ENCODE measurements at regions of chrX and their contacts with region 1.

Region 1: DNA sequence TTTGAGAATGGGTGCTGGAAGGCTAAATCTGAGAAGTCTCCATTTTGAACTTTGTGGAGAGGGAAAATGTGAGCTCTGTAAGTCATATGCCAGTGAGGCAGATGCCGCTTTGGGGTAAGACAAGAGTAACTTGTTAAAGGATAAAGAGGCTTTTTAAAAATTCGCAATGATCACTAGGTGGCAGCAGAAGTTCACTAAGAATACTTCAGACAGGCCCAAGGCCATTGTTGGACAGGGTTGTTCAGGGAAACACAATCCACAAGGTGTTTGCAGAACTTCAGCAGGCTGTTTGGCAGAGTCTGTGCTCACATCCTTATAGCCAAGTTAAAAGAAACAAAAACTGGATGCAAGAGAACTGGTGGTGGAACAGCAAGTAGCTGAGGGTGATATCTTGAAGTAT is 13.7 kb upstream of the PIGA start:
- DNase-seq: no peak
- H3K4me3 ChIP-seq: no peak overlapping the region
- H3K27ac ChIP-seq: no peak overlapping the region
- H3K4me1 ChIP-seq: no peaks in the 10 kb centered on the region
- H3K27me3 ChIP-seq: no peaks in the 10 kb centered on the region
- CTCF ChIP-seq: peak in 2 of 3 experiments; percentile 50 to 55; a peak in 3 of 4 replicates
- EP300 ChIP-seq: no peak
- POLR2A ChIP-seq: no peak
- RAD21 ChIP-seq: peak; percentile 73 to 81

Region 2: DNA sequence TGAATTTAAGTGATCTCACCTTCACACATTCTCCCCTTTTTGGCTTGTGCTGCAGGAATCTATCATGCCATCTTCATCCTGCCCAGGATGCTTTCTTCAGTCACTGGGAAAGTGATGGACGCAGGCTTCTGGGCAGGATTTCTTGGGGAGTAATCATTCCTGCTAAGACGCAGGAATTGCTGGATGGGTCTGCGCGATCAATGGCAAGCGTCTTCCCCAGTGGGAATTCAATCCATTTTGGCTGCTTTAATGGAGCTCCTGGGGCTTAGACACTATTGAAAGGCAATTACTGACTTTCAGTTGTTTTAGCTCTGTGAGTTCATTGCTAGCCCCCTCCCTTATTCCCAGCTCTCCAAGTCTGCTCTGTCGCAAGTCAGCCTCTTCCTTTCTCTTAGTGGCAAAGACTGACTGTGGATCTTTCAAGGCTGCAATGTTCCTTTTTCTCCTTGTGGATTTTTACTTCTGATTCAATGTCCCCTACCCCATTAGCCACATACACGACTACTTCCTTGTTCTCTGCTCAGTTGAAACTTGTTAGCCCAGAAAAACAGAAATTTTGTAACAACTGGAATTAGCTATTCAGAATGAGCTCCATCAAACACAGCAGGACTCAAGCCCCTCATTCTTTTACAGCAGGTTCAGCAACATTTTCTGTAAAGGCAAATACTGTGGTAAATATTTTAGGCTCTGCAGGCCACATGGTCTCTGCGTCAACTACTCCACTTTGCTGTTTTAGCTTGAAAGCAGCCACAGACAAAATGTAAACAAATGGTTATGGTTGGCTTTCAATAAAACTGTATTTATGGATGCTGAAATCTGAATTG is 234.1 kb before region 1 on chrX:
- CTCF ChIA-PET with region 1: no interaction called
- POLR2A ChIA-PET with region 1: no interaction called
- DNase-seq: peak in 1 of 2 experiments; percentile 13
- H3K4me3 ChIP-seq: peak overlapping the region in 1 of 4 experiments; percentile 29; a peak in 2 of 8 replicates
- H3K27ac ChIP-seq: no peak overlapping the region
- H3K4me1 ChIP-seq: peaks cover 0 to 5% (median 2%) of the 10 kb centered on the region in 4 experiments; a peak in 3 of 7 replicates
- H3K27me3 ChIP-seq: no peaks in the 10 kb centered on the region
- CTCF ChIP-seq: no peak
- EP300 ChIP-seq: no peak
- POLR2A ChIP-seq: no peak
- RAD21 ChIP-seq: no peak

Region 3: GRCh38 chrX:15471016-15471415 is 122.0 kb after region 1 on chrX:
- CTCF ChIA-PET with region 1: interaction called, 106 read pairs
- POLR2A ChIA-PET with region 1: no interaction called
- DNase-seq: peak in 1 of 2 experiments; percentile 53
- H3K4me3 ChIP-seq: no peak overlapping the region
- H3K27ac ChIP-seq: no peak overlapping the region
- H3K4me1 ChIP-seq: peaks cover 0 to 3% (median under 1%) of the 10 kb centered on the region in 4 experiments; a peak in 3 of 7 replicates
- H3K27me3 ChIP-seq: no peaks in the 10 kb centered on the region
- CTCF ChIP-seq: peak; percentile 56 to 70 (median 57)
- EP300 ChIP-seq: no peak
- POLR2A ChIP-seq: no peak
- RAD21 ChIP-seq: peak; percentile 70 to 78

Region 4: GRCh38 chrX:15594371-15594770 is 245.3 kb after region 1 on chrX:
- CTCF ChIA-PET with region 1: no interaction called
- POLR2A ChIA-PET with region 1: no interaction called
- DNase-seq: no peak
- H3K4me3 ChIP-seq: no peak overlapping the region
- H3K27ac ChIP-seq: no peak overlapping the region
- H3K4me1 ChIP-seq: no peaks in the 10 kb centered on the region
- H3K27me3 ChIP-seq: no peaks in the 10 kb centered on the region
- CTCF ChIP-seq: no peak; a peak in 1 of 4 replicates
- EP300 ChIP-seq: no peak
- POLR2A ChIP-seq: no peak
- RAD21 ChIP-seq: no peak; a peak in 1 of 4 replicates

Measured in H1 (cell line).